ENCODE measurements at regions of chr17 and their contacts with region 1.

Region 1: DNA sequence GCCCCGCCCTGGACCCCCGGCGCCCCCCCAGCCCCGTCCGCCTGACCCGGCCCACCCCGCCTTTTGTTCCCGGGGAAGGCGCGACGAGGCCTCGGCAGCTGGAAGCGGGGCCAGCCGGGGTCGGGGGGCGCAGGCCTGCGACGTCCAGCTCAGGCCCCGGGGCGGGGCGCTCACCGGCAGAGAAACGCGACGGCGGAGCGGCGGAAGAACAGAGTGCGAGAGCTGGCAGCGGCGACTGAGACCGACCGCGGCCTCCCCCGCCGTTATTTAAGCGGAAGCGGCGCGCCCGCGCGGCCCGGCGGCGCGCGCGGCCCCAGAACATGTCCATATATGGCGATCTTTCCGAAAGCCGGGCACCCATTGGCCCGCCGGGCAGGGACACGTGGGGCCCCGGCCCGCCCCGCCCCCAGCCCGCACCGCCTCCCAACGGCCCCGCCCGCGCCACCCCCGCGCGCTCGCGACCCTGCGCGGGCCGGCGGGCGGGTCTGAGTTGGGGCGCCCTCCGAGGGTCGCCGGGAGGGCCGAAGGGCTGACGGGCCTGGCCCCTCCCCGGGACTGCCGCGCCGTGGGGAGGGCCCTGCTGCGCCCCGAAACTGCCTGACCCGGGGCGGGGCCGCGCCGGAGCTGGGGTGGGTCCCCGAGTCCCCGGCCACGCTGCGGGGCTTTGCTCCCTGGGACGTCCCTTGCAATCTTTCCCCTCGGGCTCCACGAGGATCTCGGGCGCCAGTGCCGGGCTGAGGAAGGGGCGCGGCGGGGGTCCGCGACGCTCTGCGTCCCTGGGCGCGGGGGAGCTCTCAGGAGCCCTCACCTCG is at the start of gene ACTG1:
- DNase-seq: peak; percentile 89
- ATAC-seq: peak; percentile 32
- H3K4me3 Mint-ChIP-seq: peak within 1 kb of the TSS; percentile 99
- H3K27ac Mint-ChIP-seq: peak within 1 kb of the TSS; percentile 94
- H3K4me1 Mint-ChIP-seq: peaks cover 54% of the 10 kb centered on the region
- H3K27me3 Mint-ChIP-seq: no peaks in the 10 kb centered on the region
- CTCF ChIP-seq: no peak
- total RNA-seq, gene ACTG1: 2,863 and 2,949 TPM in 2 replicates

Region 2: GRCh38 chr17:79810130-79811010 is 1702.4 kb before region 1 on chr17:
- CTCF ChIA-PET with region 1: no interaction called
- POLR2A ChIA-PET with region 1: interaction called, 4 read pairs
- intact Hi-C with region 1: loop called (anchors 10 kb)
- DNase-seq: no peak
- ATAC-seq: peak; percentile 86
- H3K4me3 Mint-ChIP-seq: peak overlapping the region; percentile 15
- H3K27ac Mint-ChIP-seq: peak overlapping the region; percentile 46
- H3K4me1 Mint-ChIP-seq: peaks cover 36% of the 10 kb centered on the region
- H3K27me3 Mint-ChIP-seq: peaks cover 51% of the 10 kb centered on the region
- CTCF ChIP-seq: no peak

Region 3: DNA sequence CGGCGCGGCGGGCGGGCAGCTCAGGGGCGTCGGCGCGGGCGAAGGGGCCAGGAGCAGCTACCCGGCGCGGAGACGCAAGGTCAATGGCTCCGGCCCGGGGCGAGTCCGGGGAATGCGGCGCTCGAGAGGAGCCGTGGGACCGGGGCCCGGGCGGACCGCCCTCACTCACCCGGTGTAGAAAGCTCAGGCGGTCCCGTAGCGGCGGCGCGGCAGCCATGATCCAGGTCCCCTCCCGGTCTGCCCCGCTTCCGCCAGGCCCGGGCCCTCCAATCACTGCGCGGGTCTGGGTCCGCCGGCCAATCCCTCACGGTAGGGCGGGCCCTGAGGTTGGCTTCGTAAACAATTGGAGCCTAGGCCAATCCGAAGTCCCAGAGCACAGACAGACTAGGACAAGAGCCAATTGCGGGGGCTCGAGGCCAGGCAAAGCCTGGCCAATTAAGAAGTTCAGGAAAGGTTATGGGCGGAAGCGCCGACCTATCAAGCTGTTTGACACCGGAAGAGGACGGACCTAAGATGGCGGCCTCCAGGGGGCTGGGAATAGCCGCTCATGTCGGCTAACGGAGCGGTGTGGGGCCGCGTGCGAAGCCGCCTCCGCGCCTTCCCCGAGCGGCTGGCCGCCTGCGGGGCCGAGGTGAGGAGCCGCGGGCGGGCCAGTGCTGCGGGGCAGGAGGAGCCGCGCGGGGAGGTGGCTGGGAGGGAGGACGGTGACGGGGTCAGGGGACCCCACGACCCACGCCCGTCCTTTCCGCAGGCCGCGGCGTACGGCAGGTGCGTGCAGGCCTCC is 273.8 kb before region 1 on chr17 and contains the starts of genes NDUFAF8 and TEPSIN:
- CTCF ChIA-PET with region 1: no interaction called
- POLR2A ChIA-PET with region 1: interaction called, 18 read pairs
- intact Hi-C with region 1: no loop called
- DNase-seq: peak; percentile 86
- ATAC-seq: peak; percentile 95
- H3K4me3 Mint-ChIP-seq: peak within 1 kb of the TSS; percentile 93
- H3K27ac Mint-ChIP-seq: peak within 1 kb of the TSS; percentile 88
- H3K4me1 Mint-ChIP-seq: peaks cover 47% of the 10 kb centered on the region
- H3K27me3 Mint-ChIP-seq: no peaks in the 10 kb centered on the region
- CTCF ChIP-seq: no peak
- total RNA-seq, gene NDUFAF8: 52.8 and 55.8 TPM in 2 replicates
- total RNA-seq, gene TEPSIN: 82.9 and 102 TPM in 2 replicates

Region 4: GRCh38 chr17:81394921-81395599 is 117.7 kb before region 1 on chr17 and contains the start of gene BAHCC1:
- CTCF ChIA-PET with region 1: no interaction called
- POLR2A ChIA-PET with region 1: interaction called, 26 read pairs
- intact Hi-C with region 1: loop called (anchors 2 kb)
- DNase-seq: peak; percentile 70
- ATAC-seq: peak; percentile 92
- H3K4me3 Mint-ChIP-seq: peak within 1 kb of the TSS; percentile 75
- H3K27ac Mint-ChIP-seq: peak within 1 kb of the TSS; percentile 76
- H3K4me1 Mint-ChIP-seq: peaks cover 26% of the 10 kb centered on the region
- H3K27me3 Mint-ChIP-seq: peaks cover 41% of the 10 kb centered on the region
- CTCF ChIP-seq: no peak
- total RNA-seq, gene BAHCC1: 0.13 and 0.42 TPM in 2 replicates

Region 5: GRCh38 chr17:81553018-81553615 is 40.4 kb after region 1 on chr17:
- CTCF ChIA-PET with region 1: interaction called, 5 read pairs
- POLR2A ChIA-PET with region 1: interaction called, 188 read pairs
- intact Hi-C with region 1: loop called (anchors 1 kb)
- DNase-seq: no peak
- ATAC-seq: peak; percentile 71
- H3K4me3 Mint-ChIP-seq: peak overlapping the region; percentile 91
- H3K27ac Mint-ChIP-seq: peak overlapping the region; percentile 92
- H3K4me1 Mint-ChIP-seq: peaks cover 45% of the 10 kb centered on the region
- H3K27me3 Mint-ChIP-seq: no peaks in the 10 kb centered on the region
- CTCF ChIP-seq: no peak

Region 6: DNA sequence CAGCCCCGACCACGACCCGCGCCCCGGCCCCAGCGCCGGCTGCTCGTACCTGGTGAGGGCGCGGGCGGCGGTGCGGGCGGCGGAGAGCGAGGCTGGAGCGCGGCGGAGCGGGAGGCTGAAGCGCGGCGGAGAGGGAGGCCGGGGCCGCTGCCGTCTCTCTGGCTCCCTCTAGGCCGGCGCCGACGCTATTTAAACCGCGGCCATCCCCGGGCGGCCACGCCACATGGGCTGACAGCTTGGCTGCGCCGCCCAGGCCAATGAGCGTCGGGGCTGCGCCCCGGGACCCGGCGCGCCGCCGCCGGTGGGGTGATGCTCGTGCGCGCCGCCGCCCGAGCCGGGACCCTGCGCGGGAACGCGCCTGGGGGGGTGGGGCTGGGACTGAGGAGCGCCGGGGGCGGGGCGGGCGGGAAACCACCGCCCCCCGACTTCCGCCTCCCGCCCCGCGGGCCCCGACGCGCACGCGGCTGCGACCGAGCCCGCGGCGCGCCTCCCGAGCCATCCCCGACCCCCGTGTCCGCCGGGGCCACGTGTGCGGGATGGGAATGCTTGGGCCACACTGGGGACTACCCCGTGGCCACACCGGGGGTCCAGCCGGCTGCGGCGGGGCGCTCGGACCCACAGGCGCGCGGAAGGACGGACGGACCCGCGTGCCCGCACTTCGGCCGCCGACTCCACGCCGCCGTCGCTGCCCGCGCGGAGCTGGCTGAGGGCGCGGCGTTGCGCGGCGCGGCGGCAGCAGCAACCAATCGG is 585.5 kb after region 1 on chr17 and contains the start of gene FASN:
- CTCF ChIA-PET with region 1: no interaction called
- POLR2A ChIA-PET with region 1: no interaction called
- intact Hi-C with region 1: loop called (anchors 10 kb)
- DNase-seq: peak; percentile 90
- ATAC-seq: peak; percentile 78
- H3K4me3 Mint-ChIP-seq: peak within 1 kb of the TSS; percentile 73
- H3K27ac Mint-ChIP-seq: no peak within 1 kb of the TSS
- H3K4me1 Mint-ChIP-seq: peaks cover 16% of the 10 kb centered on the region
- H3K27me3 Mint-ChIP-seq: no peaks in the 10 kb centered on the region
- CTCF ChIP-seq: no peak
- total RNA-seq, gene FASN: 104 and 121 TPM in 2 replicates